Panc1 (cell line): ENCODE measurements at regions of chrX and their contacts with region 1.

Region 1: DNA sequence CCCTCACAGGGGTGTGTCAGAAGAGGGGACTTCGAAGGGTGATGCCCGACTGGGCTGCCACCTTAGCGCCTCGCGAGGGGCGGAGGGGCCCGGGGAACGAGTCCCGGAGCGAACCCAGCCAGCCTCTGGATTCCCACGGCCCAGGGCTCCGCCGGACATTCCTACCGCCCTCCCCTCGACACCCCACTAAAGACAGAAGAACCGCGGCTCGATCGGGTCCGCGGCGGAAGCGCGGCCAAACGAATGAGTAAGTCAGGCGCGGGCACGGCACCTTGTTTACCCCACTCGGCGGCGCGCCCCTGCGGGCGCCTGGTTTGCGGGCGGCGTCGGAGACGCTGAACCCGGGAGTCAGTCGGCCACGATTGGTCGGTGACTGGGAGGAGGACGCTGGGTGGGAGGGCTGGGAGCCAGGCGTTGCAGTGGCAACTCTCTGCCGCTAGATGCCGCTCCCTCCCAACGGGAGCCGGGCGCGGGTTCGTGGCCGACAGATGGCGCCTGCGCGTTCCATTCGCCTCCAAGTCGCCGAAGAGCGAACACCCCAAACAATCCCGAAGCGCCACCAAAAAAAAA is 1.4 kb upstream of the STAG2 start:
- DNase-seq: peak; percentile 88
- ATAC-seq: peak; percentile 87
- H3K4me3 ChIP-seq: peak overlapping the region; percentile 95 to 98
- H3K27ac ChIP-seq: peak overlapping the region; percentile 99
- H3K4me1 ChIP-seq: peaks cover 19% of the 10 kb centered on the region; the same call in 1 of the 2 replicates
- H3K27me3 ChIP-seq: no peaks in the 10 kb centered on the region
- CTCF ChIP-seq: peak; percentile 96

Region 2: DNA sequence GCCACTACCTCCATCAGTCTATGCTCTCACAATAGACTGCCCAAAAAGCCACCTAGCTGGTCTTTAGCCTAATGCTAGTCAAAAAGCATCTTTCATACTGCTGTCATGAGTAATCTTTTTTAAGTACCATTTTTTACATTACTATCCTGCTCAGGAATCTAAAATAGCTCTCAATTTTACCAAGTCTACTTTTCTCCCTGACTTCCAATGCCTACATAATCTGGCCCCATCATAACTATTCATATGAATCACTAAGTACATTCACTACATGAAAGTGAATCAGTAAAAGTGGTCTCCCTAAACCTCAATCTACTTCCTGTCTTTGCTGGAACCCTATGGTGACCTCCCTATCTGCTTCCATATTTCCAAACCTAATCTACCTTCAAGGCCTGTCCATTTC is 333.2 kb before region 1 on chrX:
- CTCF ChIA-PET with region 1: no interaction called
- POLR2A ChIA-PET with region 1: no interaction called
- in situ Hi-C with region 1: no loop called
- intact Hi-C with region 1: no loop called
- DNase-seq: no peak
- ATAC-seq: no peak
- H3K4me3 ChIP-seq: no peak overlapping the region
- H3K27ac ChIP-seq: no peak overlapping the region
- H3K4me1 ChIP-seq: no peaks in the 10 kb centered on the region
- H3K27me3 ChIP-seq: no peaks in the 10 kb centered on the region
- CTCF ChIP-seq: no peak

Region 3: DNA sequence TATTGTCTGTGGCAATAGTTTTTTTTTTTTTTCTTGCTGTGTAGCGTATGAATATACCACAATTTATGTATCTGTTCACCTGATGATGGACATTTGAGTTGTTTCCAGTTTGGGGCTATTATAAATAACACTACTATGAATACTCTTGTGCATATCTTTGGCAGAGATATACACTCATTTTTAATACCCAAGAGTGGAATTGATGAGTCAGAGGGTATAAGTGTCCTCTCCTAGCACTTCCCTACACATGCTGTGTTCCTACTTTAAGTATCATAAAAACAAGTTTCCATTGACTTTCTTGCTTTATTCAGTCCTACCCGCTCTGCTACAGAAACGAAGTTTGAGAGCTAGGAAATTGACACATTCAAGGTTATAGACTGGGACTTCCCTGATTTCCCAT is 60.4 kb before region 1 on chrX:
- CTCF ChIA-PET with region 1: no interaction called
- POLR2A ChIA-PET with region 1: no interaction called
- in situ Hi-C with region 1: no loop called
- intact Hi-C with region 1: no loop called
- DNase-seq: no peak
- ATAC-seq: no peak
- H3K4me3 ChIP-seq: no peak overlapping the region
- H3K27ac ChIP-seq: no peak overlapping the region
- H3K4me1 ChIP-seq: no peaks in the 10 kb centered on the region
- H3K27me3 ChIP-seq: no peaks in the 10 kb centered on the region
- CTCF ChIP-seq: no peak

Region 4: GRCh38 chrX:123943488-123943887 is 16.6 kb before region 1 on chrX:
- CTCF ChIA-PET with region 1: interaction called, 8 read pairs
- POLR2A ChIA-PET with region 1: interaction called, 12 read pairs
- in situ Hi-C with region 1: no loop called
- intact Hi-C with region 1: no loop called
- DNase-seq: no peak
- ATAC-seq: no peak
- H3K4me3 ChIP-seq: no peak overlapping the region
- H3K27ac ChIP-seq: no peak overlapping the region
- H3K4me1 ChIP-seq: no peaks in the 10 kb centered on the region
- H3K27me3 ChIP-seq: no peaks in the 10 kb centered on the region
- CTCF ChIP-seq: no peak

Region 5: GRCh38 chrX:123976706-123977316 is 16.7 kb after region 1 on chrX:
- CTCF ChIA-PET with region 1: interaction called, 20 read pairs
- POLR2A ChIA-PET with region 1: interaction called, 7 read pairs
- in situ Hi-C with region 1: no loop called
- intact Hi-C with region 1: no loop called
- DNase-seq: no peak
- ATAC-seq: peak; percentile 74; the same call in 1 of the 2 replicates
- H3K4me3 ChIP-seq: no peak overlapping the region
- H3K27ac ChIP-seq: no peak overlapping the region
- H3K4me1 ChIP-seq: peaks cover 35% of the 10 kb centered on the region
- H3K27me3 ChIP-seq: no peaks in the 10 kb centered on the region
- CTCF ChIP-seq: no peak; the same call in 1 of the 2 replicates

Region 6: DNA sequence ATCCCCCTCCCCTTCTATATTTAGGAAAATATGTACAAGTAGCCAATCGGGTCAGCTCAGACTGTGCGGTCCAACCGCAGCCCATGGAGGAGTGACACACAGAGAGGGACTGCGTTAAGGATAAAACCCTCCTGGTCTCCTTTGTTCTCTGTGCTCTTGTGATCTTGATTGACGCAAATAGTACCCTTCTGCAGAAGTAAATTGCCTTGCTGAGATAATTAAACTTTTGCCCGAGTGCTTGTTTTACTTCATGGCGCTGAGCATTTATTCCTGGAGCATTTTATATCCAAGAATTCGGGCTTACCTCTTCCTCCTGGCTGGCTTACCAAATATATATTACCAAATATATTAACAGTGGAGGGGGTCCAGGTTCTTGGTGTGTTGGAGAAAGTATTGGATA is 185.6 kb after region 1 on chrX:
- CTCF ChIA-PET with region 1: no interaction called
- POLR2A ChIA-PET with region 1: no interaction called
- in situ Hi-C with region 1: no loop called
- intact Hi-C with region 1: no loop called
- DNase-seq: no peak
- ATAC-seq: no peak
- H3K4me3 ChIP-seq: no peak overlapping the region
- H3K27ac ChIP-seq: no peak overlapping the region
- H3K4me1 ChIP-seq: no peaks in the 10 kb centered on the region
- H3K27me3 ChIP-seq: no peaks in the 10 kb centered on the region
- CTCF ChIP-seq: no peak